Breast epithelium (tissue), 4 donors: ENCODE measurements at regions of chr22 and their contacts with region 1.

Region 1: DNA sequence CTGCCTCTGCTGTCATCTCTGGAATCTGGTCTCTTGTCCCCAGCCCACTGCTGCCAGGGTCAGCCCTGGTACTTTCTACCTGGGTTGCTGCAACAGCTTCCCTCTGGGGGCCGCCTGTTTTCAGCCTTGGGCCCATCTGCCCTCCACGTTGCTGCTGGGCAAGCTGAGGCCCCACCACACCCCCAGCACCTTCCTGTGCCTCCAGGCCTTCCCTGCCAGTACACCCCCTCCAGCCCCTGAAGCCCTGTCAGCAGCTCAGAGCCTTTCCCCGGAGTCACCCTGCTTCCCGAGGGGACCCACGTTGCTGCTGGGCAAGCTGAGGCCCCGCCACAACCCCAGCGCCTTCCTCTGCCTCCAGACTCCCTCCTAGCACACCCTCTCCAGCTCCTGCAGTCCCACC is 3.3 kb upstream of the SAMM50 start:
- DNase-seq: no peak
- H3K4me3 ChIP-seq: no peak overlapping the region
- H3K27ac ChIP-seq: no peak overlapping the region
- H3K4me1 ChIP-seq: peaks cover 0 to 10% of the 10 kb centered on the region in 2 donors
- H3K27me3 ChIP-seq: peaks cover 0 to 5% of the 10 kb centered on the region in 2 donors
- CTCF ChIP-seq: no peak
- POLR2A ChIP-seq: no peak

Region 2: GRCh38 chr22:43878836-43879545 is 73.0 kb before region 1 on chr22:
- intact Hi-C with region 1: loop called (anchors 1 kb)
- DNase-seq: peak in 1 of 2 donors; percentile 34
- H3K4me3 ChIP-seq: no peak overlapping the region
- H3K27ac ChIP-seq: no peak overlapping the region
- H3K4me1 ChIP-seq: no peaks in the 10 kb centered on the region
- H3K27me3 ChIP-seq: peaks cover 0 to 24% of the 10 kb centered on the region in 2 donors
- CTCF ChIP-seq: no peak
- POLR2A ChIP-seq: no peak